ENCODE measurements at regions of chr15 and their contacts with region 1.

Region 1: DNA sequence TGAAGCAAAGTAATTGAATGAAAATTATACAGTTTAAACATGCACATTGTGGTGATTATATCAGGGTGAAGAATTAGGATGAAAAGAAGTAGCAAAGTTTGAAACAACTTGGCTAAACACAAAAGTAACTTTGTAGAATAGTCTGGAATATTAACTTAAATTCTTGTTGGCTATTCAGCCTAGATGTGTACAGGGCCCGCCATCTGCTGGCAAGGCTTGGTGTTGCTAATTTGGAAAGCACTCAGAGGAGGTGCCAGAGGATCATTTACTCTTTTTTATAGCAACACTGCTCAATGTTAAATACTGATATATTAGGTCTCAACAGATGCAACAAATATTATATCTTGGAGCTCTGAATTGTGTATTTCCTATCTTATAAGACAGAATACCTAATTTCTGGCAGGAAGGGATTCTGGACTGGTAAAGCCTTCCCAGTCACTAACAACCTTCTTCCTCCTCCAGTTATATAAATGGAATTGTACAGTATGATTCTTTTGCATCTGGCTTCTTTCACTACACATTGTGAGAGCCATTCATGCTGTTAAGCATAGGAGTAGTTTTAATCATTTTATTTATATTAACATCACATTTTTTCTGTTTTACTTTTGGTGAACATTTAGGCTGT is 36.1 kb downstream of the TTC23 start:
- DNase-seq: peak; percentile 94
- H3K4me3 ChIP-seq: no peak overlapping the region
- H3K27ac ChIP-seq: peak overlapping the region; percentile 82 to 90 (median 82)
- H3K4me1 ChIP-seq: peaks cover 0 to 57% (median 45%) of the 10 kb centered on the region in 4 donors
- H3K27me3 ChIP-seq: no peaks in the 10 kb centered on the region
- CTCF ChIP-seq: peak; percentile 83 to 93 (median 88)
- EP300 ChIP-seq: peak in 1 of 4 donors; percentile 39
- POLR2A ChIP-seq: no peak

Region 2: DNA sequence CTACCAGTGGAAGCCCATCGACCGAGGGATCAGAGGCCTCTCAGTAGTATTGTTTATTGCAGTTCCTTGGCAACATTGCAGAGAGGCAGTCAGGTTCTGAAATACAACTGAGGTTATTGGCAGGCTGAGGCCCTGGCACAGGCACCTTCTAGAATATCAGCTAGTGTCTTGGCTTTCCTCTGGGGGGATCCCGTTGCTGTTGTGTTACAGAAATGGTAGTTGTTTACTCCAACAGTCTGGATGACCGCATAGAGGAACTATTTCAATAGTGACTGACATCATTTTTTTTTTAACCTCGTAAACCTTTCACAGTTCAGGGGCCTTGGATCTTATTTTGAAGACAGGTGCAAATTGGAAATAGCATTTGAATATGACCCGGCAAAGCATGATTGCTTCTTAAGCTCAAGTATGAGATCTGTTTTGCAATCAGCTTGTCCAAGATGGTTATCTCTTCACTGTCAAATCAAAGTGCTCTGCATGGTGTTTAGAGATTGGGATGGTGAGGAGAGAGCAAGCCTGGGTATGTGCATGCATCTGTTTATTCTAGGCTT is 269.6 kb before region 1 on chr15:
- intact Hi-C with region 1: loop called (anchors 10 kb)
- DNase-seq: no peak
- H3K4me3 ChIP-seq: no peak overlapping the region
- H3K27ac ChIP-seq: peak overlapping the region; percentile 62 to 85 (median 76)
- H3K4me1 ChIP-seq: peaks cover 0 to 51% (median 45%) of the 10 kb centered on the region in 4 donors
- H3K27me3 ChIP-seq: no peaks in the 10 kb centered on the region
- CTCF ChIP-seq: no peak
- EP300 ChIP-seq: peak in 1 of 4 donors; percentile 26
- POLR2A ChIP-seq: no peak

Region 3: GRCh38 chr15:99104788-99105513 is 108.3 kb before region 1 on chr15 and contains the start of gene SYNM:
- intact Hi-C with region 1: loop called (anchors 1 kb)
- DNase-seq: peak; percentile 94
- H3K4me3 ChIP-seq: peak within 1 kb of the TSS; percentile 81 to 87 (median 82)
- H3K27ac ChIP-seq: peak within 1 kb of the TSS; percentile 90 to 100 (median 96)
- H3K4me1 ChIP-seq: peaks cover 0 to 24% (median 13%) of the 10 kb centered on the region in 4 donors
- H3K27me3 ChIP-seq: no peaks in the 10 kb centered on the region
- CTCF ChIP-seq: peak; percentile 30 to 90 (median 44)
- EP300 ChIP-seq: no peak
- POLR2A ChIP-seq: peak; percentile 87 to 95
- total RNA-seq, gene SYNM: 731 to 1,357 (median 1,117) TPM

Region 4: DNA sequence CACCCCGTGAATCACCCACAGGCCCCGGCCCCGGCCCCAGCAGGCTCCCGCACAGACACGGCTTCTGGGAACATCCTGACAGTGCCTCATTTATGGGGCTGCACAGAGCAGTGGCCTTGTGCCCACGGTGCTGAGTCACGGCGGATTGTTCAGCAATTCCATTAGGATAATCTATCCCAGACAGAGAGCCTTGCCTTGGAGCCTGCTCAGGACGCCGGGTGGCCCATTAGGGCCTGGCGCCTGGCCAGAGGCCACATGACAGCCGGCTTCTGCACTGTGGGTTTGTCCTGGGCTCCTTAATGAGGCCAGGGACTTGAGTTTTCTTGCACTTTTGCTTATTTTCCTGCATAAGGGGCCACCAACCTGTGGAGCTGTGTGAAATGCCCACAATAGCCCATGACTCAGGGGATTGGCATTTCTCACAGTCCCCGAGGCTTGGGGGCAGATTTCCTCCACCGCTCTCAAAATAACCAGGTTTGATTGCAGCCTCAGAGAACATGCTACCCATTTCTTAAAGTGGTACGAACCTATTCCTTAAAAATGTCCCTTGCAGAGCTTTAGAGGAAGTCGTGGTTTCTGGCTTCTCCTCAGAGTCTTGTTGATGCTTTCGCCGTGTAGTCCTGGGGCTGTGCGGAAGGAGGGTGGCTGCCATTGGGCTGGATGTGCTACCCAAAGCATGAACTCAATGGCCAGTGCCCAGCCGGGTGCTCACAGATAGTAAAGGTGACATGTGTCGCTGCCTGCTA is 89.4 kb before region 1 on chr15:
- intact Hi-C with region 1: loop called (anchors 5 kb)
- DNase-seq: peak; percentile 97
- H3K4me3 ChIP-seq: peak overlapping the region in 3 of 4 donors; percentile 11 to 27 (median 24)
- H3K27ac ChIP-seq: peak overlapping the region; percentile 90 to 100 (median 96)
- H3K4me1 ChIP-seq: peaks cover 0 to 100% (median 99%) of the 10 kb centered on the region in 4 donors
- H3K27me3 ChIP-seq: no peaks in the 10 kb centered on the region
- CTCF ChIP-seq: no peak
- EP300 ChIP-seq: peak in 2 of 4 donors; percentile 42 to 74
- POLR2A ChIP-seq: no peak

Region 5: DNA sequence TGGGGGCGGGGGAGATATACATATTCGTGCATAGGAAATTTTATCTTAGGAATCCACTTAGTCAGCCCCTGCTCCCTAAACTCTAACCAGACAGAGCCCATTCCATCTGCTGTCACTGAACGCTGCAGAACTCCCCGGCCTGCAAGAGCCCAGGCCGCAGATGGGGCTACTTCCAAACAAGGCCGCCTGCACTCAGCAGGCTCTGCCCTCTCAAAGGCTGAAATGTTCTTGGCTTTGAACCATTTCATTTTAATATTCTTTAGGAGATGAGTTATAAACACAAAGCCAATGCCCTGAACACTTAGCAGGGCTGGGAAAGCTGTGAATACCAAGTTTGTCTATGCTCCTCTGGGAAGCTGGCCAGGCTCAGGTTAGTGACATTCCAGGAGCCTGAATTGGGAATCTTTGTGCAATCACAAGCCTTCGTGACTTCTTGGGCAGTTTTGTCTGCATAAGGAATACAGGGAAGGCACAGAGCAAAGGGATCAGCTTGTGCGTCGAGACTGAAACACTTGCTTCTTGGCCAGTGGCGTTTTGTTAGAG is 43.5 kb before region 1 on chr15:
- intact Hi-C with region 1: loop called (anchors 1 kb)
- DNase-seq: peak; percentile 97
- H3K4me3 ChIP-seq: no peak overlapping the region
- H3K27ac ChIP-seq: peak overlapping the region; percentile 92 to 97 (median 96)
- H3K4me1 ChIP-seq: peaks cover 0 to 96% (median 84%) of the 10 kb centered on the region in 4 donors
- H3K27me3 ChIP-seq: no peaks in the 10 kb centered on the region
- CTCF ChIP-seq: no peak
- EP300 ChIP-seq: peak; percentile 84 to 100 (median 92)
- POLR2A ChIP-seq: no peak

Region 6: GRCh38 chr15:99181545-99181971 is 31.7 kb before region 1 on chr15:
- intact Hi-C with region 1: no loop called
- DNase-seq: peak; percentile 79
- H3K4me3 ChIP-seq: no peak overlapping the region
- H3K27ac ChIP-seq: peak overlapping the region; percentile 92 to 97 (median 96)
- H3K4me1 ChIP-seq: peaks cover 0 to 59% (median 44%) of the 10 kb centered on the region in 4 donors
- H3K27me3 ChIP-seq: no peaks in the 10 kb centered on the region
- CTCF ChIP-seq: no peak
- EP300 ChIP-seq: no peak
- POLR2A ChIP-seq: no peak

Measured in sigmoid colon (tissue), 7 donors.